Activated CD4-positive, alpha-beta T cell treated with anti-CD3 and anti-CD28 coated beads, Interleukin-2, amount 10 ng/mL, durations not matched to agents 7 days and 5 days (primary cell): ENCODE measurements at regions of chr12 and their contacts with region 1.

Region 1: GRCh38 chr12:43758728-43759563 is at the starts of genes IRAK4 and PUS7L:
- DNase-seq: peak; percentile 95
- H3K4me3 Mint-ChIP-seq: peak within 1 kb of the TSS; percentile 99
- H3K27ac Mint-ChIP-seq: peak within 1 kb of the TSS; percentile 100
- H3K4me1 Mint-ChIP-seq: peaks cover 72% of the 10 kb centered on the region
- H3K27me3 Mint-ChIP-seq: no peaks in the 10 kb centered on the region
- total RNA-seq, gene IRAK4: 39.0 to 41.4 TPM
- total RNA-seq, gene PUS7L: 17.4 to 22.4 TPM

Region 2: GRCh38 chr12:42299392-42300308 is 1459.3 kb before region 1 on chr12:
- CTCF ChIA-PET with region 1: no interaction called
- POLR2A ChIA-PET with region 1: interaction called, 11 read pairs
- DNase-seq: peak; percentile 30
- H3K4me3 Mint-ChIP-seq: peak overlapping the region; percentile 18
- H3K27ac Mint-ChIP-seq: no peak overlapping the region
- H3K4me1 Mint-ChIP-seq: peaks cover 9% of the 10 kb centered on the region
- H3K27me3 Mint-ChIP-seq: no peaks in the 10 kb centered on the region